Right cardiac atrium (tissue), 5 donors: ENCODE measurements at regions of chr5 and their contacts with region 1.

Region 1: DNA sequence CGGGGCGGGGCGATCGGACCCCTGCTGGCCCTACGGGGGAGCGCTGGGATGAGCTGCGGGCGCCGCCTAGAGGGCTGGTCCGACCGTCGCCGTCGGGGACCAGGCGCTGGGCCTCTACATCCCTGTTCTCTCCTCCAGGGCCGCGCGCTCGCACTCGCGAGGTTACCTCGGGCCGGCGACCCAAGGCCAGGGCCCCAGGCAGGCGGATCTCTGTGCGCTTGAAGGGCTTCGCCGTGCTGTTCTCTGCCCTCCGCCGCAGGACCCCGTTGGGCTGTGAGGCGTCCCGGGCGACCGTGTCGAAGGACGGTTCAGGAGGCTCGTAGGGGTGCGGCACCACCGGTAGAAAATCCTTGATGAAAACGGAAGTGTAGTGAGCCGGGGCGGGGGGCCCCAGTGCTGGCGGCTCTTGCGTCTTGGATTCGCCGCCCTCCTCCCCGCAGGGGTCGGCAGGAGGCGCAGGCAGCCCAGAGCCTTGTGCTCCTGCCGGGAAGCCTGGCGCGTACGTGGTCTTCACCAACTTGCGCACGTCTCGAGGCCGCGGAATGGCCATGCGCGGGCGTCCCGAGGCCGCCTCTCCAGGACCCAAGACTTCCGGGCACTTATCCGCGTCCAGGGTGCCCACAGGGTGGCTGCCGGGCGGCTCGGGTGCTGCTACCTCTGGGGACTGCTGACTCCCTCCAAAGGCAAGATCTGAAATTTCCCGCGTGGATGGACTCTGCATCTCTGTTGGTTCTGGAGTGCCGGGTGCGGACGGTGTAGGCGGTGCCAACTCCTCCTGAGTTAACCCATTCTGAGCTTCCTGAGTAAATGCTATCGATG is 2.0 kb downstream of the PROB1 start:
- DNase-seq: peak; percentile 59 to 82 (median 81)
- ATAC-seq: peak; percentile 3 to 23
- H3K4me3 ChIP-seq: peak overlapping the region; percentile 57
- H3K27ac ChIP-seq: peak overlapping the region; percentile 93
- H3K4me1 ChIP-seq: peaks cover 7% of the 10 kb centered on the region
- H3K27me3 ChIP-seq: no peaks in the 10 kb centered on the region

Region 2: DNA sequence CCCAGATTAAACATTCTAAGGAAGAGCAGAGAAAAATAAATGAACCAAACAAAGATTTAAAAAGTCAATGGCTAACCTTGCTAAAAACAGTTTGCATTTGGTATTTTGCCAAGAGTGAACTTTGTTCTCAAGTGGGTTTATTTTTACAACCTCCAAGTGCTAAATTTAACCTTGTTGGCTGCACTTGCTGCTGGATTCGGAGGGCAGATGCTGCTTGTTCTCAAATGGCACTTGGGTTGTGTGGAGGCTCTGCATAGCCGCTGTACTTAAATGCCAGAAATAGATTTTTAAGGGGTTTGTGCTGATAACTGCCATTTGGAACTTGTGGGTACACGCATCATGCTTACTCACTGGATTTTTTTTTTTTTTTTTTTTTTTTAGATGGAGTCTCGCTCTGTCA is 24.3 kb after region 1 on chr5:
- intact Hi-C with region 1: loop called in 1 of 4 experiments (anchors 2 kb)
- DNase-seq: peak in 2 of 3 donors; percentile 44 to 69
- ATAC-seq: peak; percentile 63 to 66
- H3K4me3 ChIP-seq: no peak overlapping the region
- H3K27ac ChIP-seq: no peak overlapping the region
- H3K4me1 ChIP-seq: peaks cover 12% of the 10 kb centered on the region
- H3K27me3 ChIP-seq: no peaks in the 10 kb centered on the region